Activated naive CD8-positive, alpha-beta T cell treated with anti-CD3 and anti-CD28 coated beads, Interleukin-2, amount 10 ng/mL, durations not matched to agents 7 days and 5 days (primary cell): ENCODE measurements at regions of chr19 and their contacts with region 1.

Region 1: DNA sequence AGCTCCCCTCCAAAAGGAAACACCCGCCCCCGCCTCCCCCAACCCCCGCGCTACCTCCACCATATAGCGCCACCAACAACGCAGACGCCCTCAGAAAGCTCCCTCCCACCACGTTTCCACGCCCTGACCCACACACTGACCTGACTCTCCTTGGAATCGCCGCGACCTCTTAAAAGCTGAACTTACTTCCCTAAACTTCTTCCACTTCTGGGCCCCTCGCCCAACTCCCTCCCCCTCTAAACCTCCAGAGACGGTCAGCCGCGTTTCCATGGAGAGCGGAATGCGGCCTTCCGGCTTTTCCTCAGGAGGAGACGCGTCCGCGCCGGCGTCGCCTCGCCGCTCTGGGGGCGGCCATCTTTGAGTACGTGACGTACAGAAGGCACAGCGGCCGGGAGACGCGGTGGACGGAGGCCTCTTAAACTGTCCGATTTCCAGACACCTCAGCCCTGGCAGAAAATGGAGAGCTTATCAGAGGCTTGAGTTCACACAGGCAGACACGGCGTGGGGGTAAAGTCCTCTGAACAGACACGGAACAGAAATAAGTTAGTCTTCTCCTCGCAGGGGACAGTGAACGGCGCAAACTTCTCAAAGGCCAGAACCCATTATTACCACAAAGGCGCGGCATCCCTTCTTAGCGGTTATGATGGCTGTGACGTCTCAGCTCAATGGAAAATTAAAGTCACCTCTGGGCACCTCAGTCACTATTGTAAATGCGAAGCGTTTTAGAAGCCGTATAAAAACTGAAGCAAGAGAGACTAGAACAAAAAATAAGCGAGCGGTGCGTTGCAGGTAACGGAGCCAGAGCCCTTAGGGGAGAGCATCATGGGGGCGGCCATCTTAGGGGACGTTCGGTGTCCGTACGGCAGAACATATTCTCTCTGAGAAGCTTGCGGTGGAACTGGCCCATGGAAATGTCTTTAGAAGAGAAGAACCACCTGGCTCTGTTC is at the start of gene ZNF432:
- DNase-seq: peak; percentile 86
- ATAC-seq: peak; percentile 88
- H3K4me3 Mint-ChIP-seq: peak within 1 kb of the TSS; percentile 96
- H3K27ac Mint-ChIP-seq: peak within 1 kb of the TSS; percentile 99
- H3K4me1 Mint-ChIP-seq: peaks cover 11% of the 10 kb centered on the region
- H3K27me3 Mint-ChIP-seq: no peaks in the 10 kb centered on the region
- total RNA-seq, gene ZNF432: 18.3 to 23.8 TPM

Region 2: DNA sequence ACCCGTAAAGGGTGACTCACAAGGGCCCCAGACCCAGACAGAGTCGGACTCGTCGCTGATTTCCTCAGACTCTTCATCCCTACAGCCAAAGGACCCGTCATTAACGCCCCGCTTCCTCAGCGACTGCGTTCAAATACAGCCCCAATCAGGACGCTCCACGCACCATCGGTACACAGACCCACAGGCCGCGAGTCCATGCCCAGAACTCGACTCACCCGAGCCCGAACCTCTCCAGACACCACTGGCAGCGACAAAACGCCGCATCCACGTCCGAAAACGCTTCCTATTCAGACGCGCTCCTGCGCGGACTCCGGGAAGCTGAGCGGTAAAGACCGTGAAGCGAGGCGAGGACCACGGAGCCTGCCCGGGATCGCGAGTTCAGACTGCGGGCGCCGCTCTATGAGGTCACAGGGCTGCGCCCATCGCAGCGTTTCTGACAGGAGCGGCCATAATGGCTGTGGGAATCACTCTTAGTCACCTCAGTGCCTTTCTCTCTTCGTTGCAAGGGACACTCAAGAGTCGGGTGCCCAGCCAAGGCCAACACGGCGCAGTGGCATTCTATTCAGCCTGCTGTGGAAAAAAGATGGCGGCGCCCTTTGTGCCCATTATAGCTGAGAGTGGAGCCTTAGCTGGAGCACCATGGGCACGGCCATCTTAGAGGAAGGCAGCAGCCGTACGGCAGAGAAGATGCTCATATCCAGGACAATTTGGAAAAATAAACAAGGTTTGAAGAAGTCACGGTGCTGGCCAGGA is 20.6 kb before region 1 on chr19 and contains the start of gene ZNF614:
- POLR2A ChIA-PET with region 1: interaction called, 10 read pairs
- DNase-seq: peak; percentile 91
- ATAC-seq: peak; percentile 96
- H3K4me3 Mint-ChIP-seq: peak within 1 kb of the TSS; percentile 99
- H3K27ac Mint-ChIP-seq: peak within 1 kb of the TSS; percentile 99
- H3K4me1 Mint-ChIP-seq: peaks cover 10% of the 10 kb centered on the region
- H3K27me3 Mint-ChIP-seq: no peaks in the 10 kb centered on the region
- total RNA-seq, gene ZNF614: 11.6 to 12.7 TPM

Region 3: DNA sequence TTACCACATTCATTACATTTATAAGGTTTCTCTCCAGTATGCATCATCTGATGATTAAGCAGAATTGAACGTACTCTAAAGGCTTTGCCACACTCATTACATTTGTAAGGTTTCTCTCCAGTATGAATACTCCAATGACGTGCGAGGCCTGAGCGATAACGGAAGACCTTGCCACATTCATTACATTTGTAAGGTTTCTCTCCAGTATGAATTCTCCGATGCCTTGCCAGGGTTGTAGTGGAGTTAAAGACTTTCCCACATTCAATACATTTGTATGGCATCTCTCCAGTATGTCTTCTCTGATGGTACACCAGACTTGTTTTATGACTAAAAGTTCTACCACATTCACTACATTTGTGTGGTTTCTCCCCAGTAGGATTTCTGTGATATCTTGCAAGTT is 16.6 kb after region 1 on chr19:
- POLR2A ChIA-PET with region 1: no interaction called
- DNase-seq: no peak
- ATAC-seq: no peak
- H3K4me3 Mint-ChIP-seq: no peak overlapping the region
- H3K27ac Mint-ChIP-seq: no peak overlapping the region
- H3K4me1 Mint-ChIP-seq: no peaks in the 10 kb centered on the region
- H3K27me3 Mint-ChIP-seq: no peaks in the 10 kb centered on the region